ENCODE measurements at regions of chr12 and their contacts with region 1.

Region 1: DNA sequence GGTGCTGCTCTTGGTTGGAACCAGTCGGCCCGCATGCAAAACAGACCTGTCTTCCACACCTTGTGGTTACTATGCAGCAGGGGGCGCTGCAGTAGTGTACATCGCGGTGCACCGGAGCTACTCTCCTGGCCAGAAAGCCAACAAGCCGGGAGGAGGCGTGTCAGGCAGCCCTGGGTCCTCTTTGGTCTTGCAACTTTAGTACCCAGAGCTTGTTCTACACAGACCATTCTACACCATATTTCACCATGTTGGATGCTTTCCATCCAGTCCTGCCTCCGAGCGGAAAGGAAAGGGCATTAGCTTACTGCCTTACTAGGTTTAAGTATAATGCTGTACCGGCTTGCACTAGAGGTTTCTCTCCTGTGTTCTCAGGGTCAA is 927 bp upstream of the TMTC2 start:
- DNase-seq: peak; percentile 97
- ATAC-seq: peak; percentile 66
- H3K4me3 Mint-ChIP-seq: peak overlapping the region; percentile 83
- H3K27ac Mint-ChIP-seq: no peak overlapping the region
- H3K4me1 Mint-ChIP-seq: peaks cover 27% of the 10 kb centered on the region
- H3K27me3 Mint-ChIP-seq: peaks cover 9% of the 10 kb centered on the region
- CTCF ChIP-seq: peak; percentile 88

Region 2: GRCh38 chr12:82757059-82757458 is 71.3 kb after region 1 on chr12:
- CTCF ChIA-PET with region 1: interaction called, 12 read pairs
- POLR2A ChIA-PET with region 1: no interaction called
- DNase-seq: no peak
- ATAC-seq: no peak
- H3K4me3 Mint-ChIP-seq: no peak overlapping the region
- H3K27ac Mint-ChIP-seq: no peak overlapping the region
- H3K4me1 Mint-ChIP-seq: peaks cover 31% of the 10 kb centered on the region
- H3K27me3 Mint-ChIP-seq: peaks cover 21% of the 10 kb centered on the region
- CTCF ChIP-seq: no peak

Region 3: GRCh38 chr12:82910246-82910893 is 224.6 kb after region 1 on chr12:
- CTCF ChIA-PET with region 1: interaction called, 16 read pairs
- POLR2A ChIA-PET with region 1: no interaction called
- DNase-seq: peak; percentile 31
- ATAC-seq: peak; percentile 98
- H3K4me3 Mint-ChIP-seq: no peak overlapping the region
- H3K27ac Mint-ChIP-seq: no peak overlapping the region
- H3K4me1 Mint-ChIP-seq: peaks cover 16% of the 10 kb centered on the region
- H3K27me3 Mint-ChIP-seq: no peaks in the 10 kb centered on the region
- CTCF ChIP-seq: no peak

Region 4: DNA sequence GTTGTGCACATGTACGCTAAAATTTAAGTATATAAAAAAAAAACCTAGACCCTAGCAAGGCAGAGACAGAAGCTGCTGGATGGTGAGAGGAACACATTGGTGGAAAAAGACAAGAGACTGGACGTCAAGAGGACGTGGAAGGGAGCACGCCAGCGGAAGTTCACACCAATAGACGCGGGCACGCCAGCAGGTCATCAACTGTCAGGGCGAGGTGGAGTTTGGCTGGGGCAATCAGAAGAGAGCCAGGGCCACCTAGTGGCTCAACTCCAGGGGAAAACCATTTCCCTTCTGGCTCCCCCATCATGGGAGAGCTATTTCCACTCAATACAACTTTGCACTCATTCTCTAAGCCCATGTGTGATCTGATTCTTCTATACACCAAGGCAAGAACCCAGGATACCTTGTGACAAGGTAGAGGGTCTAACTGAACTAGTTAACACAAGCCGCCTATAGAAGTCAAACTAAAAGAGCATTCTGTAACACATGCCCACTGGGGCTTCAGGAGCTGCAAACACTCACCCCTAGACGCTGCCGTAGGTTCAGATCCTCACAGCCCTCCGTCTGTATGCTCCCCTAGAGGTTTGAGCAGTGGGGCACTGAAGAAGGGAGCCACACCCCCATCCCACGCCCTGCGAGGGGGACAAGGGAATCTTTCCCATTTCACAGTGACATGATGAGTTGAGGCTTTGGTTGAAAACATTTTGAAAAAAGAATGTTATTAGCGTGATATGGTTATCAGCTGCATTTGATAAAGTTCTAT is 703.6 kb after region 1 on chr12:
- CTCF ChIA-PET with region 1: interaction called, 16 read pairs
- POLR2A ChIA-PET with region 1: interaction called, 6 read pairs
- DNase-seq: peak; percentile 63
- ATAC-seq: peak; percentile 98
- H3K4me3 Mint-ChIP-seq: peak overlapping the region; percentile 39; the same call in 1 of the 2 replicates
- H3K27ac Mint-ChIP-seq: no peak overlapping the region
- H3K4me1 Mint-ChIP-seq: peaks cover 6% of the 10 kb centered on the region
- H3K27me3 Mint-ChIP-seq: no peaks in the 10 kb centered on the region
- CTCF ChIP-seq: peak; percentile 41

Region 5: GRCh38 chr12:83823431-83823963 is 1137.7 kb after region 1 on chr12:
- CTCF ChIA-PET with region 1: interaction called, 27 read pairs
- POLR2A ChIA-PET with region 1: no interaction called
- DNase-seq: peak; percentile 89
- ATAC-seq: peak; percentile 84
- H3K4me3 Mint-ChIP-seq: no peak overlapping the region
- H3K27ac Mint-ChIP-seq: no peak overlapping the region
- H3K4me1 Mint-ChIP-seq: peaks cover 15% of the 10 kb centered on the region
- H3K27me3 Mint-ChIP-seq: no peaks in the 10 kb centered on the region; the same call in 1 of the 2 replicates
- CTCF ChIP-seq: peak; percentile 73; the same call in 1 of the 2 replicates